ENCODE measurements at regions of chr18 and their contacts with region 1.

Region 1: GRCh38 chr18:71398531-71398930 is 1109.7 kb downstream of the SOCS6 start:
- DNase-seq: peak; percentile 67
- H3K4me3 ChIP-seq: no peak overlapping the region
- H3K27ac ChIP-seq: no peak overlapping the region
- H3K4me1 ChIP-seq: no peaks in the 10 kb centered on the region
- H3K27me3 ChIP-seq: no peaks in the 10 kb centered on the region
- CTCF ChIP-seq: peak; percentile 66

Region 2: GRCh38 chr18:71327850-71328249 is 70.7 kb before region 1 on chr18:
- CTCF ChIA-PET with region 1: no interaction called
- POLR2A ChIA-PET with region 1: no interaction called
- intact Hi-C with region 1: no loop called
- DNase-seq: peak; percentile 31
- H3K4me3 ChIP-seq: no peak overlapping the region
- H3K27ac ChIP-seq: no peak overlapping the region
- H3K4me1 ChIP-seq: peaks cover 10% of the 10 kb centered on the region
- H3K27me3 ChIP-seq: no peaks in the 10 kb centered on the region
- CTCF ChIP-seq: no peak

Region 3: GRCh38 chr18:71371951-71372605 is 26.5 kb before region 1 on chr18:
- CTCF ChIA-PET with region 1: no interaction called
- POLR2A ChIA-PET with region 1: no interaction called
- intact Hi-C with region 1: no loop called
- DNase-seq: no peak
- H3K4me3 ChIP-seq: no peak overlapping the region
- H3K27ac ChIP-seq: no peak overlapping the region
- H3K4me1 ChIP-seq: peaks cover 5% of the 10 kb centered on the region
- H3K27me3 ChIP-seq: no peaks in the 10 kb centered on the region
- CTCF ChIP-seq: no peak

Region 4: DNA sequence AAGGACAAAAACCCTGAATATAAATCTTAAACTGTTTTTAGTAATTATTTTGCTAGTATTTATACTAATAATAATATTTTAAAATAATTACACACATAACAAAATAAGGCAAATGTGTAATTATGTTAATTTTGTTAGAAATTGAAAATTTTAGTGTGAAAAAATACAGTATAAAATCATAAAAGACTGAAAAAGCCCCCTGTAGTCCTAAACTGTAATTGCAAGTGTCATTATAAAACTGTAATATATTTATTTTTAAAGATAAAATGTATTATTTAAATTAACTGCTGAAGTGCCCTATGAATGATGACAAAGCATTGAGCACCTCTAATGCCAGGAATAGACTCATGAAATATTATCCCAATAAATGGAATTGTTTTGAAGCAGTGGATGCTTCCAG is 27.9 kb after region 1 on chr18:
- CTCF ChIA-PET with region 1: no interaction called
- POLR2A ChIA-PET with region 1: no interaction called
- intact Hi-C with region 1: no loop called
- DNase-seq: no peak
- H3K4me3 ChIP-seq: no peak overlapping the region
- H3K27ac ChIP-seq: no peak overlapping the region
- H3K4me1 ChIP-seq: no peaks in the 10 kb centered on the region
- H3K27me3 ChIP-seq: no peaks in the 10 kb centered on the region
- CTCF ChIP-seq: 0 out of 2 replicates have a peak, but pooled peaks have one; percentile 13

Region 5: GRCh38 chr18:71784777-71785176 is 386.2 kb after region 1 on chr18:
- CTCF ChIA-PET with region 1: no interaction called
- POLR2A ChIA-PET with region 1: no interaction called
- intact Hi-C with region 1: loop called (anchors 5 kb)
- DNase-seq: peak; percentile 40
- H3K4me3 ChIP-seq: no peak overlapping the region
- H3K27ac ChIP-seq: no peak overlapping the region
- H3K4me1 ChIP-seq: no peaks in the 10 kb centered on the region
- H3K27me3 ChIP-seq: no peaks in the 10 kb centered on the region
- CTCF ChIP-seq: peak; percentile 65

Region 6: GRCh38 chr18:72086421-72086820 is 687.9 kb after region 1 on chr18:
- CTCF ChIA-PET with region 1: no interaction called
- POLR2A ChIA-PET with region 1: no interaction called
- intact Hi-C with region 1: loop called (anchors 10 kb)
- DNase-seq: peak; percentile 62
- H3K4me3 ChIP-seq: no peak overlapping the region
- H3K27ac ChIP-seq: no peak overlapping the region
- H3K4me1 ChIP-seq: no peaks in the 10 kb centered on the region
- H3K27me3 ChIP-seq: no peaks in the 10 kb centered on the region
- CTCF ChIP-seq: peak; percentile 63

Region 7: GRCh38 chr18:72530622-72531021 is 1132.1 kb after region 1 on chr18:
- CTCF ChIA-PET with region 1: no interaction called
- POLR2A ChIA-PET with region 1: no interaction called
- intact Hi-C with region 1: loop called (anchors 5 kb)
- DNase-seq: peak; percentile 69
- H3K4me3 ChIP-seq: no peak overlapping the region
- H3K27ac ChIP-seq: no peak overlapping the region
- H3K4me1 ChIP-seq: peaks cover 8% of the 10 kb centered on the region
- H3K27me3 ChIP-seq: no peaks in the 10 kb centered on the region
- CTCF ChIP-seq: peak; percentile 51

Measured in A673 (cell line).